ENCODE measurements at regions of chr11 and their contacts with region 1.

Region 1: GRCh38 chr11:76577199-76577920 is 93.2 kb downstream of the LRRC32 start:
- DNase-seq: no peak
- H3K4me3 ChIP-seq: no peak overlapping the region
- H3K27ac ChIP-seq: no peak overlapping the region
- H3K4me1 ChIP-seq: peaks cover 0 to 5% (median 0%) of the 10 kb centered on the region in 4 experiments
- H3K27me3 ChIP-seq: no peaks in the 10 kb centered on the region

Region 2: GRCh38 chr11:76588455-76589325 is 11.3 kb after region 1 on chr11:
- CTCF ChIA-PET with region 1: interaction called, 18 read pairs
- POLR2A ChIA-PET with region 1: interaction called, 5 read pairs
- DNase-seq: peak; percentile 67 to 93 (median 88)
- H3K4me3 ChIP-seq: no peak overlapping the region
- H3K27ac ChIP-seq: peak overlapping the region; percentile 11 to 82
- H3K4me1 ChIP-seq: peaks cover 0 to 26% (median 21%) of the 10 kb centered on the region in 4 experiments
- H3K27me3 ChIP-seq: no peaks in the 10 kb centered on the region

Region 3: GRCh38 chr11:76734456-76735420 is 157.4 kb after region 1 on chr11:
- CTCF ChIA-PET with region 1: no interaction called
- POLR2A ChIA-PET with region 1: no interaction called
- DNase-seq: no peak
- H3K4me3 ChIP-seq: no peak overlapping the region
- H3K27ac ChIP-seq: no peak overlapping the region
- H3K4me1 ChIP-seq: no peaks in the 10 kb centered on the region
- H3K27me3 ChIP-seq: peaks cover 0 to 15% (median 0%) of the 10 kb centered on the region in 5 experiments